Pancreas (tissue), 10 donors: ENCODE measurements at regions of chr14 and their contacts with region 1.

Region 1: GRCh38 chr14:73553845-73554244 is 4.9 kb downstream of the HEATR4 start:
- DNase-seq: no peak
- ATAC-seq: no peak
- H3K4me3 ChIP-seq: no peak overlapping the region
- H3K27ac ChIP-seq: no peak overlapping the region
- H3K4me1 ChIP-seq: no peaks in the 10 kb centered on the region
- H3K27me3 ChIP-seq: no peaks in the 10 kb centered on the region
- CTCF ChIP-seq: no peak

Region 2: GRCh38 chr14:73589116-73589515 is 35.3 kb after region 1 on chr14:
- intact Hi-C with region 1: loop called in 1 of 3 experiments (anchors 5 kb)
- DNase-seq: no peak
- ATAC-seq: no peak
- H3K4me3 ChIP-seq: no peak overlapping the region
- H3K27ac ChIP-seq: no peak overlapping the region
- H3K4me1 ChIP-seq: no peaks in the 10 kb centered on the region
- H3K27me3 ChIP-seq: no peaks in the 10 kb centered on the region
- CTCF ChIP-seq: no peak